A673 (cell line): ENCODE measurements at regions of chr16 and their contacts with region 1.

Region 1: GRCh38 chr16:54633943-54634362 is 296.7 kb upstream of the IRX5 start:
- DNase-seq: peak; percentile 56
- H3K4me3 ChIP-seq: no peak overlapping the region
- H3K27ac ChIP-seq: no peak overlapping the region
- H3K4me1 ChIP-seq: peaks cover 12% of the 10 kb centered on the region
- H3K27me3 ChIP-seq: no peaks in the 10 kb centered on the region
- CTCF ChIP-seq: peak; percentile 76

Region 2: DNA sequence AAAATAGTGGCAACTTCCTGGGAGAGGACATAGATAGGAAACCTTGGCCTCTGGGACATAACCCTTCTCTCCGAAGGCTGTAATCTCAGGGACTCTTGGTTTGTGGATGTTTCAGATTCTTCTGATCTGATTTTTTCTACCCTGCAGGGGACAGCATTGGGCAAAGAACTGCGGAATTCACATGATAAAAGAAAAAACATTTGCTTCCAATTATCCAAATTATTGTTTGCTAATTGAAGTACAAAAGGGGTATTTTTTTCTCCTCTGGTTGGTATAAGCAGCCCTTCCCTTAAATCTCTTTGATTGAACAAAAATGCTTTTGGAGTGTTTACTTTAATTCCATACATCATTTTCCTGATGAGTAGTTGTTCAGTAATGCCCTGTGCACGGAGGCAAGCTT is 95.7 kb before region 1 on chr16:
- CTCF ChIA-PET with region 1: no interaction called
- POLR2A ChIA-PET with region 1: no interaction called
- intact Hi-C with region 1: no loop called
- DNase-seq: peak; percentile 26
- H3K4me3 ChIP-seq: no peak overlapping the region
- H3K27ac ChIP-seq: no peak overlapping the region
- H3K4me1 ChIP-seq: no peaks in the 10 kb centered on the region
- H3K27me3 ChIP-seq: peaks cover 6% of the 10 kb centered on the region
- CTCF ChIP-seq: peak; percentile 48; the same call in 1 of the 2 replicates

Region 3: DNA sequence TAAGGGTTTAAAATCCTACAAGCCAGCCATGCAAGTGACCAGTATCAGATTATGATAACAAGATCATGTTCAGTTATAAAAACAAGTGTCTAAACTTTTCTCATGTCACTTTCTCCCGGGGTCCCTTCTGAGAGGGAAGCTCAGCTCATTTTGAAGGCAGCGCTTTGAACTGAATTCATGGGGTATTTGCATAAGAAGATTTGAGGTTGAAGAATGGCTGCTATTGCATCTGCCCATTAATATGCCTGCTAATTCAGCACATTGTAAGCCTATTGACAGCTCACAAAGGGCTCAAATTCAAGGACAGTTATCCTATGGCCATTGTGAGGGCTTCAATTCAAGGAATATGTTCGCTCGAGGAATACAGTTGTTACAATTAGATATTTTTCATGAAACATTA is 57.2 kb before region 1 on chr16:
- CTCF ChIA-PET with region 1: no interaction called
- POLR2A ChIA-PET with region 1: interaction called, 11 read pairs
- intact Hi-C with region 1: no loop called
- DNase-seq: no peak
- H3K4me3 ChIP-seq: no peak overlapping the region
- H3K27ac ChIP-seq: no peak overlapping the region
- H3K4me1 ChIP-seq: no peaks in the 10 kb centered on the region
- H3K27me3 ChIP-seq: no peaks in the 10 kb centered on the region
- CTCF ChIP-seq: no peak

Region 4: DNA sequence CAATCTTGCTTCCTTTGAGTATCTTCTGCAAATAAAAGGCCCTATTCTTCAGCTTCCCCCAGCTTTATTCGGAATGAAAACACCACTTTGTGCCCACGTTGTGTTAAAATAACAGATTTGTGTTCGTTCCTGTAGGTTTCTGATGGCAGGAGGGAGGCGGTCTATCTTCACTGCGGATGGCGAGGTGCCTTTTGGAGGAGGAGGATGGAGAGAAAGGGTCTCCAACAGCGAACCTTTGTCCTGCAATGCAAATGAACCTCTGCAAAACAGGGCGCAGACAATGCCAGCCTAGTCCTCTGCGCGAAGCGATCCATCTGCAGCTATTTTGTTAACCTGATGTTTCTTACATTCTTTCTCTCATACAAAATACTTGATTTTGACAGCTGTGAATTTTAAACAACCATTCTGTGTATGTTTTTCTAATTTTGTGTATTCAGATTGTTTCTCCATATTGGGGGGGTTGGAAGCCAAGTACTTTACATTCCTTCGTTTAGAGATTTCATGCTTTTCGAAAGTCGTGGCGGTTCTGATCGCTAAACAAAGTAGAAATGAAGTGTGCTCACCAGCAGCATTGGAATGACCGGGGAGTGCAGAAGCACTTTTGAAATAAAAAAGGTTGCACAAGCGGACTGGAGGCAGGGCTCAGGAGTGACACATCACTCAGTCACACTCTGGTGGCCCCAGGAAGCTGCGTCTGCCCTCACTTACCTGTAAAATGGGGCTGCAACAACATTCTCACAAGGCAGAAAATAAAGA is 17.7 kb after region 1 on chr16:
- CTCF ChIA-PET with region 1: no interaction called
- POLR2A ChIA-PET with region 1: no interaction called
- intact Hi-C with region 1: no loop called
- DNase-seq: no peak
- H3K4me3 ChIP-seq: no peak overlapping the region
- H3K27ac ChIP-seq: no peak overlapping the region
- H3K4me1 ChIP-seq: peaks cover 20% of the 10 kb centered on the region
- H3K27me3 ChIP-seq: peaks cover 14% of the 10 kb centered on the region
- CTCF ChIP-seq: no peak

Region 5: DNA sequence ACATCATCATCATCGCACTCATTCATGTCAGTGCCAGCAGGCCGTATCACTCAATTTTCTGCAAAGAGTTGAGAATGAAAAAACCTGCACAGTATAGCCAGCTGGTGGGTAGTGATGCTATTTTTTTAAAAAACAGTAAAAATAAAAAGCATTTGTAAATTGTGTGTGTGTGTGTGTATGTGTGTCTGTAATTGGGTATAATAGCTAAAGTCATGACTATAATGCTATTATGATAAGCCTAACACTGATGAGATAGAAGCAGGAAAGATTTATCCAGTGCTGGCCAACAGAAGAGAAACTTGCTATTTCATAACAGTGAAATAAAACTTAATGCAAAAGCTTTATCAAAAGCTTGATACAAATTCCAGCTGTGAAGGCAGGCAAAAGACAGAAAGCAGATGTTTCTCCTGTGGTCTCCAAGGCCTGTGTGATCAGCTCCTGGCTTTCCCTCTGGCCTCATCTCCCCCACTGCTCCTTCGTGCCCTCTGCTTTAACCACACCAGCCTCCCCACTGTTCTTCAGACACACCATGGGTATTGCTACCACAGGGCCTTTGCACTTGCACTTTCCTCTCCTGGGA is 90.5 kb after region 1 on chr16:
- CTCF ChIA-PET with region 1: no interaction called
- POLR2A ChIA-PET with region 1: no interaction called
- intact Hi-C with region 1: no loop called
- DNase-seq: no peak
- H3K4me3 ChIP-seq: no peak overlapping the region
- H3K27ac ChIP-seq: no peak overlapping the region
- H3K4me1 ChIP-seq: no peaks in the 10 kb centered on the region
- H3K27me3 ChIP-seq: no peaks in the 10 kb centered on the region
- CTCF ChIP-seq: no peak